HCT116 (cell line): ENCODE measurements at regions of chr7 and their contacts with region 1.

Region 1: GRCh38 chr7:156156734-156157610 is 344.7 kb upstream of the SHH start:
- DNase-seq: peak; percentile 54
- ATAC-seq: peak; percentile 83
- H3K4me3 ChIP-seq: no peak overlapping the region
- H3K27ac ChIP-seq: no peak overlapping the region; the same call in 1 of the 2 replicates
- H3K4me1 ChIP-seq: peaks cover 6 to 16% of the 10 kb centered on the region in 2 experiments; a peak in 3 of 4 replicates
- H3K27me3 ChIP-seq: no peaks in the 10 kb centered on the region
- CTCF ChIP-seq: peak; percentile 39 to 67 (median 57); a peak in 5 of 6 replicates
- POLR2A ChIP-seq: no peak
- RAD21 ChIP-seq: peak; percentile 80

Region 2: DNA sequence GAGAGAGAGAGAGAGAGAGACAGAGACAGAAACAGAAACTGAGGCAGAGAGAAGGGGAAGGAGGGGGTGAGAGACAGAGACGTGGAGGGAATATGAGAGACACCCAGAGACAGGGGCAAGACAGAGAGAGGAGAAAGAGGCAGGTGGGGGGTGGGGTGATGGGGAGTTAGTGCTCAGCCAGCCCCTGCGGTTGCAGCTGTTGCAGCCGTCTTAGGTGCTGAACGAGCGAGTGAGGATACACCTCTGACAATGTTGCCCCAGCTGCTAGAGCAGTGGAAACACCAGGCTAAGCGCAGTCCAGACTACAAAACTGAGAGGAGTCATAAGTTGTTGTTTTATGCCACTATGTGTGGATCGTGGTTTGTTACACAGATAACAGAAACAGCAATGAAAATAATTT is 16.5 kb before region 1 on chr7:
- CTCF ChIA-PET with region 1: no interaction called
- POLR2A ChIA-PET with region 1: no interaction called
- RAD21 ChIA-PET with region 1: no interaction called
- intact Hi-C with region 1: no loop called
- DNase-seq: no peak
- ATAC-seq: no peak
- H3K4me3 ChIP-seq: no peak overlapping the region
- H3K27ac ChIP-seq: no peak overlapping the region
- H3K4me1 ChIP-seq: no peaks in the 10 kb centered on the region
- H3K27me3 ChIP-seq: no peaks in the 10 kb centered on the region
- CTCF ChIP-seq: no peak
- POLR2A ChIP-seq: no peak
- RAD21 ChIP-seq: no peak

Region 3: GRCh38 chr7:156473476-156474240 is 316.7 kb after region 1 on chr7:
- CTCF ChIA-PET with region 1: no interaction called
- POLR2A ChIA-PET with region 1: no interaction called
- RAD21 ChIA-PET with region 1: no interaction called
- intact Hi-C with region 1: loop called (anchors 5 kb)
- DNase-seq: peak; percentile 27
- ATAC-seq: peak; percentile 90
- H3K4me3 ChIP-seq: no peak overlapping the region
- H3K27ac ChIP-seq: no peak overlapping the region
- H3K4me1 ChIP-seq: peaks cover 0 to 19% of the 10 kb centered on the region in 2 experiments; a peak in 2 of 4 replicates
- H3K27me3 ChIP-seq: no peaks in the 10 kb centered on the region
- CTCF ChIP-seq: peak; percentile 85 to 90 (median 87)
- POLR2A ChIP-seq: no peak
- RAD21 ChIP-seq: peak; percentile 91